CD4-positive, alpha-beta T cell (primary cell): ENCODE measurements at regions of chr2 and their contacts with region 1.

Region 1: DNA sequence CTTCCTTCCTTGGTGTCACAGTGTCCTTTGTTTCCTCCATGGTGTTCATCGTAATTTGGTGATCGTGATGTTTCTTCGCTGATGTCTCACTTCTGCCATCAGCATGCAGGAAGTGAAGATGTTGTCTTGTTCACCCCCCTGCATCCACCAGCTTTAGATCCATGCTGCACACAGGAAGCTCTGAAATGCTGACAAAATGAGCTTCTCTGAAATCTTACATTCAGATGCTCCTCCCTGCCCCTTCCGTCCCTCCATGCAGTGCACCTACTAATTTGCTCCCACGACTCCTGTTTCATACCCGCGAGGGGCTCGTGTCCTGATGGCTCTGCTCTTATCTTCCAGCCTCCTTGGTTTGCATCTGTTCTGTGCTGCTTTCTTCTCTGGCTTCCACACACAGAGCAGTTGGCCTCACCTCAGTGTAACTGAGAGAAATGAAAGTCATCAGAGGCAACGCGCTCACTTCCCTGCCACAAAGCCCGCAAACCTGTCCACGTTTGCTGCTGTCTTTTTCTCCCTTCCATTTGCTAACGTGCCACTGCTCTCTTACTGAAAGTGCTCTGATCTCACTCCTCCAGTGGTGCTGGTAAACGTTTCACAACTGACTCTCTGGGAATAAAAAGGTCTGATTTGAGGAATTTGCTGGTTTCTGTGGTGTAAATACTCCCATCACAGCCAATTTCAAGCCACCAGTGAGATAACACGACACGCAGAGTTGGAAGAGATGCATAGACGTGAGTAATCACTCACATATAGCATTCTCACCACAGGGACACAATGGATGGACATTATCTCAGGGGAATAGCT is 41.0 kb upstream of the MGAT4A start:
- DNase-seq: peak; percentile 45 to 92 (median 64)
- ATAC-seq: peak; percentile 70
- H3K4me3 ChIP-seq: peak overlapping the region; percentile 60
- H3K4me3 Mint-ChIP-seq: peak overlapping the region; percentile 94
- H3K27ac ChIP-seq: peak overlapping the region; percentile 86 to 90
- H3K27ac Mint-ChIP-seq: peak overlapping the region; percentile 96
- H3K4me1 ChIP-seq: peaks cover 86% of the 10 kb centered on the region
- H3K4me1 Mint-ChIP-seq: peaks cover 84% of the 10 kb centered on the region
- H3K27me3 ChIP-seq: no peaks in the 10 kb centered on the region
- H3K27me3 Mint-ChIP-seq: no peaks in the 10 kb centered on the region
- CTCF ChIP-seq: no peak

Region 2: DNA sequence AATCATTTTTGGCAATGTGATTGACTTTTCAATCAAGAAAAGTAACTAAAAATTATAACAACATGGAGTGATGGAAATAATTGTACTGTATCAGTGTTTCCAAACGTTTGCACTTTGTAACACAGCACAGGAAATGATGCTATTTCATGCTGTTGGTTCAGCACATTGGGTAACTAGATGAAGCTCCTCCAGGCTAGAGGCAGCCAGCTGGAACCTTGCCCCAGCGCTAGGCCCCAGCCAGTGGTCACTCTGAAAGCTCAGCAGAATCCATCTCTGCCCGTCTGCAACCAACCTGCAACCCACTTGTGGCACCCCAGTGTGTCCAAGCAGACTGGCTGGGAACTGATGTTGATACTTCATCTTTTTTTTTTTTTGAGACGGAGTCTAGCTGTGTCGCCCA is 148.3 kb before region 1 on chr2:
- CTCF ChIA-PET with region 1: no interaction called
- POLR2A ChIA-PET with region 1: no interaction called
- intact Hi-C with region 1: no loop called
- DNase-seq: no peak
- ATAC-seq: peak; percentile 21
- H3K4me3 ChIP-seq: no peak overlapping the region
- H3K4me3 Mint-ChIP-seq: no peak overlapping the region
- H3K27ac ChIP-seq: no peak overlapping the region
- H3K27ac Mint-ChIP-seq: peak overlapping the region; percentile 85
- H3K4me1 ChIP-seq: peaks cover 2% of the 10 kb centered on the region
- H3K4me1 Mint-ChIP-seq: peaks cover 46% of the 10 kb centered on the region
- H3K27me3 ChIP-seq: no peaks in the 10 kb centered on the region
- H3K27me3 Mint-ChIP-seq: no peaks in the 10 kb centered on the region
- CTCF ChIP-seq: no peak

Region 3: DNA sequence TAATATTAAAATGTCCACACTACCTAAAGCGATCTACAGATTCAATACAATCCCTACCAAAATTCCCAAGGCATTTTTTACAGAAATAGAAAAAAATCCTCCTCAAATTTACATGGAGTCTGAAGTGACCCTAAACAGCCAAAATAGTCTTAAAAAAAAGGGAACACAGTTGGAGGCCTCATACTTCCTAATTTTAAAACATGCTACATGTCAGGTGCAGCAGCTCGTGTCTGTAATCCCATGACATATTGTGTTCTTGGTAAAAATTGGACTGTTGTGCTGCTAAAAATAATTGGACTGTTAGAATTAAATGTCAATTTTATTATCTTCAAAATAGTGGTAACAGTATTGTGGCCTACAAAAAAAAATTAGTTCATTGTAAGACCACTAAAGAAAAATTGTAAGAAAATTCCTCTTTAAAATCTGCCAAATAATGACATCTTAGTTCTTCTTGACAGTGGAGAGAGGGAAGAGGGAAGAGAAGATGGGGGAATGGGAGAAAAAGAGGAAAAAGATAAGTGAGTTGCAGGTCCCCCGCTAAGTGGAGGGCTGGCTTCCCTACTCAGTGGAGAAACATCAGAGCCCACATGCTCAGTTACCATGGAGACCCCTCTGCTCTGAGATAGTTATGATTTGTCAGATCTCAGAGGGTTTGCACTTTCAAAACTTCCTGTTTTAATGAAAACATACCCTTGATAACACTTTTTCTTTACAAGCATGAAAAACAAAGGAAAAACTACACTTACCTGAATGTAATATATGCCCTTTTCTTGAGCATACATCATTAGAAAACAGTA is 117.0 kb before region 1 on chr2:
- CTCF ChIA-PET with region 1: interaction called, 25 read pairs
- POLR2A ChIA-PET with region 1: interaction called, 94 read pairs
- intact Hi-C with region 1: loop called in 1 of 2 experiments (anchors 2 kb)
- DNase-seq: peak in 6 of 14 experiments; percentile 31 to 79 (median 66)
- ATAC-seq: peak; percentile 63
- H3K4me3 ChIP-seq: no peak overlapping the region
- H3K4me3 Mint-ChIP-seq: peak overlapping the region; percentile 81
- H3K27ac ChIP-seq: peak overlapping the region; percentile 68 to 79
- H3K27ac Mint-ChIP-seq: peak overlapping the region; percentile 92
- H3K4me1 ChIP-seq: peaks cover 27% of the 10 kb centered on the region
- H3K4me1 Mint-ChIP-seq: peaks cover 93% of the 10 kb centered on the region
- H3K27me3 ChIP-seq: no peaks in the 10 kb centered on the region
- H3K27me3 Mint-ChIP-seq: no peaks in the 10 kb centered on the region
- CTCF ChIP-seq: no peak

Region 4: DNA sequence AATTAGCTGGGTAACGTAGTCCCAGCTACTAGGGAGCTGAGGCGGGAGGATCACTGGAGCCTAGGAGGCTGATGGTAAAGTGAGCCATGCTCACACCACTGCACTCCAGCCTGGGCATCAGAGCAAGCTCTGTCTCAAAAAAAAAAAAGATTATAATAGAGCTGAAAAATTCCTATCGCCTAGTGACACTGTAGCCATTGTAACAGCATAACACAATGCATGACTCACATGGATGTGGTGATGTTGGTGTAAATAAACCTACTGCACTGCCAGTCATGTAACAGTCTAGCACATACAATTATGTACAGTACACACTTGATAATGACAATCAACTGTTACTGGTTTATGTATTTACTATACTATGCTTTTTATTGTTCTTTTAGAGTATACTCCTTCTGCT is 80.6 kb before region 1 on chr2:
- CTCF ChIA-PET with region 1: interaction called, 3 read pairs
- POLR2A ChIA-PET with region 1: interaction called, 16 read pairs
- intact Hi-C with region 1: no loop called
- DNase-seq: peak in 4 of 14 experiments; percentile 14 to 30 (median 25)
- ATAC-seq: peak; percentile 72
- H3K4me3 ChIP-seq: no peak overlapping the region
- H3K4me3 Mint-ChIP-seq: no peak overlapping the region
- H3K27ac ChIP-seq: peak overlapping the region in 1 of 2 donors; percentile 30
- H3K27ac Mint-ChIP-seq: peak overlapping the region; percentile 92
- H3K4me1 ChIP-seq: peaks cover 65% of the 10 kb centered on the region
- H3K4me1 Mint-ChIP-seq: peaks cover 92% of the 10 kb centered on the region
- H3K27me3 ChIP-seq: no peaks in the 10 kb centered on the region
- H3K27me3 Mint-ChIP-seq: no peaks in the 10 kb centered on the region
- CTCF ChIP-seq: no peak

Region 5: GRCh38 chr2:98743835-98744234 is 28.1 kb before region 1 on chr2:
- CTCF ChIA-PET with region 1: interaction called, 3 read pairs
- POLR2A ChIA-PET with region 1: interaction called, 414 read pairs
- intact Hi-C with region 1: no loop called
- DNase-seq: peak in 1 of 14 experiments; percentile 57
- ATAC-seq: peak; percentile 59
- H3K4me3 ChIP-seq: no peak overlapping the region
- H3K4me3 Mint-ChIP-seq: no peak overlapping the region
- H3K27ac ChIP-seq: no peak overlapping the region
- H3K27ac Mint-ChIP-seq: peak overlapping the region; percentile 49
- H3K4me1 ChIP-seq: peaks cover 44% of the 10 kb centered on the region
- H3K4me1 Mint-ChIP-seq: peaks cover 77% of the 10 kb centered on the region
- H3K27me3 ChIP-seq: no peaks in the 10 kb centered on the region
- H3K27me3 Mint-ChIP-seq: no peaks in the 10 kb centered on the region
- CTCF ChIP-seq: no peak

Region 6: DNA sequence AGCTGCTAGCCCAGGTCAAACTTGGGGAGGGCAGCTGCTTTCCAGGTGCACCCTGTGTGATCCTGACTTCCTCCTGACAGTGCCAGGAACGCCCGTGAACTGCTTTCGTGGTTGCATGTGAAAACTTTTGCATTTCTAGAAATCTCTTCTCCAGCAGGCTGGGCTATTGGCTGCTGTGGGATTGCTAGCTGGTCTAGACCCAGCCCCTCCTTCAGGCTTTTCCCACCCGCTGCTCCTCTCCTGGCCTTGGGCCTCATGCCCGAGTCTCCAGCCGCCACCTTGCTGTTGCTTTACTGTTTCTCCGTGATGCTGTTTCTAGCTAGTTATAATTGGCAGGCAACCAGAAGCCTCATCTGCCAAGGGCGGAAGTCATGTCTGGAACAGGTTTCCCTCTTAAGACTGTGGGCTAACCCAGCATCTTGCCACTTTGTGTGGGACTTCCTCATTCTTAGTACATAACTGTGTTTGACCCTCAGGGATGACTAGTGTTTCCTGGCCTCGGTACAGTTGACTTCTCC is 14.0 kb before region 1 on chr2:
- CTCF ChIA-PET with region 1: interaction called, 9 read pairs
- POLR2A ChIA-PET with region 1: interaction called, 129 read pairs
- intact Hi-C with region 1: loop called in 1 of 2 experiments (anchors 1 kb)
- DNase-seq: peak in 13 of 14 experiments; percentile 41 to 89 (median 58)
- ATAC-seq: peak; percentile 78
- H3K4me3 ChIP-seq: peak overlapping the region; percentile 33
- H3K4me3 Mint-ChIP-seq: peak overlapping the region; percentile 75
- H3K27ac ChIP-seq: peak overlapping the region; percentile 73 to 75
- H3K27ac Mint-ChIP-seq: peak overlapping the region; percentile 94
- H3K4me1 ChIP-seq: peaks cover 68% of the 10 kb centered on the region
- H3K4me1 Mint-ChIP-seq: peaks cover 95% of the 10 kb centered on the region
- H3K27me3 ChIP-seq: no peaks in the 10 kb centered on the region
- H3K27me3 Mint-ChIP-seq: no peaks in the 10 kb centered on the region
- CTCF ChIP-seq: no peak

Region 7: GRCh38 chr2:98828793-98829371 is 57.0 kb after region 1 on chr2:
- CTCF ChIA-PET with region 1: interaction called, 3 read pairs
- POLR2A ChIA-PET with region 1: interaction called, 46 read pairs
- intact Hi-C with region 1: loop called in 1 of 2 experiments (anchors 5 kb)
- DNase-seq: peak in 4 of 14 experiments; percentile 47 to 71 (median 60)
- ATAC-seq: peak; percentile 56
- H3K4me3 ChIP-seq: no peak overlapping the region
- H3K4me3 Mint-ChIP-seq: peak overlapping the region; percentile 74
- H3K27ac ChIP-seq: peak overlapping the region in 1 of 2 donors; percentile 18
- H3K27ac Mint-ChIP-seq: peak overlapping the region; percentile 83
- H3K4me1 ChIP-seq: peaks cover 56% of the 10 kb centered on the region
- H3K4me1 Mint-ChIP-seq: peaks cover 84% of the 10 kb centered on the region
- H3K27me3 ChIP-seq: no peaks in the 10 kb centered on the region
- H3K27me3 Mint-ChIP-seq: no peaks in the 10 kb centered on the region
- CTCF ChIP-seq: no peak

Region 8: GRCh38 chr2:98903767-98904485 is 132.0 kb after region 1 on chr2:
- CTCF ChIA-PET with region 1: no interaction called
- POLR2A ChIA-PET with region 1: no interaction called
- intact Hi-C with region 1: no loop called
- DNase-seq: no peak
- ATAC-seq: no peak
- H3K4me3 ChIP-seq: no peak overlapping the region
- H3K4me3 Mint-ChIP-seq: no peak overlapping the region
- H3K27ac ChIP-seq: no peak overlapping the region
- H3K27ac Mint-ChIP-seq: no peak overlapping the region
- H3K4me1 ChIP-seq: no peaks in the 10 kb centered on the region
- H3K4me1 Mint-ChIP-seq: peaks cover 4% of the 10 kb centered on the region
- H3K27me3 ChIP-seq: no peaks in the 10 kb centered on the region
- H3K27me3 Mint-ChIP-seq: peaks cover under 1% of the 10 kb centered on the region
- CTCF ChIP-seq: no peak